SK-N-SH (cell line): ENCODE measurements at regions of chr14 and their contacts with region 1.

Region 1: DNA sequence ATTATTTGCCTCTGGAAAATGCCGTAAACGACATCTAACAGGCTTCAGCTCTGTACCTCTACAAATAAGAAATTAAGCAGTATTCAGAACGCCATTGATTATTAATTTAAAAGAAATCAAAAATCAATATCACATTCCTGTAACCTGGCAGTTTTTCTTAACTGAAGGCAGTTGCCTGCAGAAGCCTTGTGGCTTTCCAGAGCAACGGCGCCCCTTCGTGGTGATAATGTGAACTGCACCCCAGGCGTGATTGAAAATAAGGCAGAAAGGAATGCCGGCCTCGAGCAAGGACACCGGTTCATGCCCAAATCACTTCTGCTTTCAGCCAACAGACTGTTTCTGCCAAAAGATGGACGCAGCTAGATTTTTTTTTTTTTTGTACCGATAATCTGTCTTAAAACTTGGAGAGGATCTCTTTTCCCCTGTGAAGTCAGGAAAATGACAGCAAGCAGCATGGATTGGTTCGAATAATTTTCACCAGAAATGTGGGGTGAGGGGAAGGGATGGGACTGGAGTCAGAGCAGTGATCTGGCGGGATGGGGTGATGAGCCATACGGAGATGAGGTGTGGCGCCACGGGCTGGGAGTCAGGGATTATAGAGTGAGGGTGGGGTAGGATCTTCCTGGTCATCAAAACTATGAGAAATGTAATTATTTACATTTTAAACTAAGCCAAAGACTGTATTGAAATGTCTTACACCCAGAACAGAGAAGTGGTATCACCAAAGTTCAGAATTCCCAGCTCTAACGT is 473.0 kb downstream of the DPF3 start:
- DNase-seq: peak; percentile 52
- H3K4me3 ChIP-seq: peak overlapping the region in 1 of 2 experiments; percentile 26; a peak in 1 of 4 replicates
- H3K27ac ChIP-seq: no peak overlapping the region
- H3K4me1 ChIP-seq: no peaks in the 10 kb centered on the region; a peak in 1 of 4 replicates
- H3K27me3 ChIP-seq: peaks cover 4% of the 10 kb centered on the region; the same call in 1 of the 2 replicates
- CTCF ChIP-seq: peak; percentile 98
- EP300 ChIP-seq: no peak
- RAD21 ChIP-seq: peak; percentile 81

Region 2: GRCh38 chr14:72408020-72408419 is 12.9 kb before region 1 on chr14:
- CTCF ChIA-PET with region 1: interaction called, 23 read pairs
- POLR2A ChIA-PET with region 1: no interaction called
- DNase-seq: no peak
- H3K4me3 ChIP-seq: no peak overlapping the region
- H3K27ac ChIP-seq: no peak overlapping the region
- H3K4me1 ChIP-seq: no peaks in the 10 kb centered on the region
- H3K27me3 ChIP-seq: no peaks in the 10 kb centered on the region; the same call in 1 of the 2 replicates
- CTCF ChIP-seq: no peak
- EP300 ChIP-seq: no peak
- RAD21 ChIP-seq: no peak

Region 3: DNA sequence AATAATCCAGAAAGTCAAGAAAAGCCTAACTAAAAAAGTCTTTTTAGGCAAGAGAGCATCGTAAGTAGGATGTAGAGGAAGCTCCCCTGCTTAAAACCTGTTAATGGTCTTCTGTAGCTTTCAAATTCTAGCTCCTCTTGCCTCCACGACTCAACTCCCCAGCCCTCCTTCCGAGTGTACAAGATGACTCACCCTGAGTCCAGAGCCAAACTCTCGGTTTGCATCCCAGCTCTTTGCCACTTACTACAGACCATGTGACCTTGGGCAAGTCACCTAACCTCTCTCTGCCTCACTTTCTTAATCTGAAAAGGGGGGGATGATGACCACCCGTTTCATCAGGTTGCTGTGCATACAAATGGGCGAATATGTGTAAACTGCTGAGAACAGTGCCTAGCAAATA is 12.6 kb after region 1 on chr14:
- CTCF ChIA-PET with region 1: interaction called, 12 read pairs
- POLR2A ChIA-PET with region 1: no interaction called
- DNase-seq: no peak
- H3K4me3 ChIP-seq: no peak overlapping the region
- H3K27ac ChIP-seq: no peak overlapping the region
- H3K4me1 ChIP-seq: no peaks in the 10 kb centered on the region
- H3K27me3 ChIP-seq: no peaks in the 10 kb centered on the region
- CTCF ChIP-seq: no peak
- EP300 ChIP-seq: no peak
- RAD21 ChIP-seq: no peak

Region 4: GRCh38 chr14:72643317-72643801 is 222.5 kb after region 1 on chr14:
- CTCF ChIA-PET with region 1: no interaction called
- POLR2A ChIA-PET with region 1: no interaction called
- DNase-seq: no peak
- H3K4me3 ChIP-seq: no peak overlapping the region
- H3K27ac ChIP-seq: peak overlapping the region; percentile 25 to 88; a peak in 3 of 4 replicates
- H3K4me1 ChIP-seq: peaks cover 4 to 21% of the 10 kb centered on the region in 2 experiments; a peak in 3 of 4 replicates
- H3K27me3 ChIP-seq: no peaks in the 10 kb centered on the region
- CTCF ChIP-seq: peak; percentile 21; the same call in 1 of the 2 replicates
- EP300 ChIP-seq: peak in 1 of 2 experiments; percentile 96; a peak in 2 of 4 replicates
- RAD21 ChIP-seq: no peak